Calu3 (cell line): ENCODE measurements at regions of chr6 and their contacts with region 1.

Region 1: GRCh38 chr6:166382933-166383801 is at the start of gene MPC1:
- DNase-seq: peak; percentile 98
- H3K4me3 Mint-ChIP-seq: peak within 1 kb of the TSS; percentile 93
- H3K27ac Mint-ChIP-seq: peak within 1 kb of the TSS; percentile 74
- H3K4me1 Mint-ChIP-seq: peaks cover 14% of the 10 kb centered on the region
- H3K27me3 Mint-ChIP-seq: no peaks in the 10 kb centered on the region
- CTCF ChIP-seq: no peak
- total RNA-seq, gene MPC1: 41.5 and 48.9 TPM in 2 replicates

Region 2: DNA sequence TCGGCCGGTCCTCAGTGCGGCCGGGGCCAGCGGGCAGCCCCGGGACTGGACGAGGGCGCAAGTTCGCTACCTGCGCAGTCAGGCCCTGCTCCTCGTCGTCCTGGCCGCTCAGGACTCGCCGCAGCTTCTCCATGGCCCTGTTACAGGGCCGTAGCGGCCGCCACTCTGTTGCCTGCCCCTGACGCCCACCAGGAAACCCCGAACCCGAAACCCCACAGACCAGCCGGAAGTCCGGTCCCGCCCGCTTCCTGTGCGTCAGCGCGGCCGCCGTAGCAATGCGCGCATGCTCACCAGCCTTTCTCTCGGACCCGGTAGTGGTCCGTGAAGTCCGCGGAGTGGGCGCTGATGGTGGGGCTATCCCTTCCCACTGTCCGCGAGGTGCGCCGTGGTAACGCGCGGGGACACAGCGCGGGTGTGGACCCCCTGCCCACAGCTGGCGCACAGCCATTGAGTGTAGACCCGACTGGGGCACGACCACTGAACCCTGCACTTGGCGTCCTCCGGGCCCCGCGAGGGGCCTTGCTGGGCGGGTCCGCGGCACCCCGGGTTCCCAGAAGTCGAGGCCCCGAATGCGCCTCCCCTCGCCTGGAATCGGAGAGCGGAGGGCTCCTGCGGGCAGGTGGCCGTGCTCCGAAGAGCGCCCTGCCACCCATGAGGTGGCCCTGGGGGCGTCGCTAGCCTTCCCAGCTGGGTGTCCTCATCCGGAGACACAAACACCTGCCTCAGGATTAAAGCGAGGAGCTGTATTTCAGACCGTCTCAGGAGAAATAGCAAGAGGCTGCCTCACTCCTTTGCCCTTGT is 40.6 kb before region 1 on chr6 and contains the start of gene SFT2D1:
- CTCF ChIA-PET with region 1: interaction called, 3 read pairs
- intact Hi-C with region 1: loop called (anchors 5 kb)
- DNase-seq: peak; percentile 83
- H3K4me3 Mint-ChIP-seq: peak within 1 kb of the TSS; percentile 85
- H3K27ac Mint-ChIP-seq: peak within 1 kb of the TSS; percentile 65
- H3K4me1 Mint-ChIP-seq: peaks cover 8% of the 10 kb centered on the region
- H3K27me3 Mint-ChIP-seq: peaks cover 7% of the 10 kb centered on the region
- CTCF ChIP-seq: no peak
- total RNA-seq, gene SFT2D1: 76.4 and 82.4 TPM in 2 replicates